ENCODE measurements at regions of chr19 and their contacts with region 1.

Region 1: GRCh38 chr19:35495107-35496064 is 5.1 kb upstream of the KRTDAP start:
- DNase-seq: peak; percentile 73
- ATAC-seq: peak; percentile 93

Region 2: DNA sequence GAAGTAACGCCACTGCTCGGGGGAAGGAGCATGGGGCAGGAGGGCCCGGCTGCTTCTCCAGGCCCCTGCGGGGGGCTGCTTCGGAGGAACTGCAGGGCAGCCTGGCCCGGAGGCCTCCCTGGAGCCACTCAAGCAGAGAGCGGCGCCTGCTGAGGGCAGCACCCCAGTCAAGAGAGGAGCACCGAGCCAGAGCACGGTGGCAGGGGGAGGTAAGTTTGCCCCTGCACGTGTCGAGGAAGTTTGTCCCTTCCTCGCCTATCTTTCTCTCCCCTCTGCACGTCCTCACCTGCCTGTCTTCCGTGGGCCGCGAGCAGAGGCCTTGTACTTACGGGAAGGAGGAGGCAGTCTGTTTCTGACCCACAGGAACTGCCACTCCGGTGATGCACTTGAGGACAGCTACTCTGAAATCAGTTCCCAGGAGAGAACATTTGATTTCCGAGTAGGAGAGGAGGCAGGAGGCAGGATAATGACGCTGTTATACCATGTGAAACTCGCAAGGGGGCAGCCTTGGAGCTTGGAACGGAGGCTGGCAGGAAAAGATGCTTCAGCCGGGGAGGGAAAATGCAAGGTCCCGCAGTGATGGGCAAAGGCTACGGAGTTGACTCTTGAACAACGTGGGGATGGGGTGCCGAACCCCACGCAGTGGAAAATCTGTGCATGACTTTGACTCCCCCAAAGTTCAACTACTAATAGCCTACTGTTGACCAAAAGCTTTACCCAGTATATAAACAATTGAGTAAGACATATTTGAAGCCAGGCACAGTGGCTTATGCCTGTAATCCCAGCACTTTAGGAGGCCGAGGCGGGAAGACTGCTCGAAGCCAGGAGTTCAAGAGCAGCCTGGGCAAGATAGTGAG is 142.7 kb before region 1 on chr19:
- intact Hi-C with region 1: loop called (anchors 5 kb)
- DNase-seq: peak; percentile 77
- ATAC-seq: peak; percentile 82

Measured in sciatic nerve (tissue), 2 donors.